Mucosa of descending colon (tissue), 3 donors: ENCODE measurements at regions of chr11 and their contacts with region 1.

Region 1: DNA sequence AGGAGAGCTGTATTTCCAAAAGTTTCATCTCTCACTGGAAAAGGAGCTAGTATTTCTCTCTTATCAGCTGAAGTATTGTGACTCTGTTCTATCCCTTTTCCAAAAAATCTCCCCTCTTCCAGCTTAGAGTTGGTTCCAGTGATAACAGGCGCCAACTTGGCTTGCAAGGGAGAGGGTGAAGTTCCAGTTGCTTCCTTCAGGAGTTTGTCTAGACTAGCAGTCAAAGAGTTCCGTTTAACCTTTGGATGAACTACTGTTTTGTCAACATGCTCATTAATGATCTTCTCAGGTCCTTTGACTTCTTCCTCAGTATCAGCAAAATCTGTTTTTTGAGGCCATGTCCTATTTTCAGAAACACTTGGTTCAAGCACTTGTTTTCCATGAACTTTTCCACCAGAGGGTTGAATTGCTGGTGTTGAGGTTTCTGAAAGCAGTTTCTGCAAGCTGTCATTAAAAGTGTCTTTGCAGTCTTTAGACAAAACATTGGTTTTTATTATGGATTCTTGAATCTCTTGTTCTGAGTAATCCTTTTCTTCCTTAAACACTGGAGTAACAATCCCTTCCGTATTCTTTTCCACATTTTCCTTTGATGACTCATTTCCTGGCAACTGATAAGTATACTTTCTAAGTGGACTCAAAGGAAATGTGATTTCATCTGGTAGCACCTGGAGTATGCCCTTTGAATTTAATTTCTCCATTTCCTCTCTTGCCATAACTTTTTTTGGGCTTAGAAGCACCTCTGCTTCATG is 39.7 kb upstream of the CCDC89 start:
- DNase-seq: no peak
- ATAC-seq: peak; percentile 80
- H3K4me3 ChIP-seq: no peak overlapping the region
- H3K4me1 ChIP-seq: no peaks in the 10 kb centered on the region
- CTCF ChIP-seq: no peak

Region 2: GRCh38 chr11:85748411-85748891 is 22.8 kb after region 1 on chr11:
- intact Hi-C with region 1: loop called in 1 of 2 experiments (anchors 2 kb)
- DNase-seq: no peak
- ATAC-seq: no peak
- H3K4me3 ChIP-seq: no peak overlapping the region
- H3K4me1 ChIP-seq: peaks cover 24% of the 10 kb centered on the region
- CTCF ChIP-seq: no peak

Region 3: GRCh38 chr11:85844426-85845129 is 118.9 kb after region 1 on chr11:
- intact Hi-C with region 1: no loop called
- DNase-seq: no peak
- ATAC-seq: peak; percentile 96
- H3K4me3 ChIP-seq: no peak overlapping the region
- H3K4me1 ChIP-seq: no peaks in the 10 kb centered on the region
- CTCF ChIP-seq: no peak